ENCODE measurements at regions of chr1 and their contacts with region 1.

Region 1: GRCh38 chr1:45303582-45304310 is 22.9 kb upstream of the HPDL start:
- DNase-seq: peak; percentile 98
- CTCF ChIP-seq: peak; percentile 82

Region 2: GRCh38 chr1:44792783-44793714 is 510.7 kb before region 1 on chr1:
- CTCF ChIA-PET with region 1: interaction called, 21 read pairs
- POLR2A ChIA-PET with region 1: interaction called, 3 read pairs
- DNase-seq: no peak
- CTCF ChIP-seq: no peak

Region 3: GRCh38 chr1:45011837-45012638 is 291.7 kb before region 1 on chr1 and contains the start of gene UROD:
- CTCF ChIA-PET with region 1: interaction called, 188 read pairs
- POLR2A ChIA-PET with region 1: interaction called, 24 read pairs
- DNase-seq: peak; percentile 95
- CTCF ChIP-seq: no peak

Region 4: DNA sequence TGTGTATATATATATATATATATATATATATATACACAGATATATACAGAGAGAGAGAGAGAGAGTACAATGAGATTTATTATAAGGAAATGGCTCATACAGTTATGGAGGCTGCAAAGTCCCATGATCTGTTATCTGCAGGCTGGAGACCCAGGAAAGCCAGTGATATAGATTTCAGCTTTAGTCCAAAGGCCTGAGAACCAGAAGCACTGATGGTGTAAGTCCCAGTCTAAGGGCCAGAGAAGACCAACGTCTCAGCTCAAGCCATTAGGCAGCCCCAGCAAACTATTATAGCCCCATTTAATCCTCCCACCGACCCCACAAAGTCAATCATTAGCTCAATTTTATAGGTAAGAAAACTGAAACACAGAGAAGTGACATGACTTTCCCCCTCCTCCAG is 12.0 kb before region 1 on chr1:
- CTCF ChIA-PET with region 1: interaction called, 11 read pairs
- POLR2A ChIA-PET with region 1: no interaction called
- DNase-seq: no peak
- CTCF ChIP-seq: no peak

Region 5: GRCh38 chr1:45326627-45327623 is 23.2 kb after region 1 on chr1 and contains the start of gene HPDL:
- CTCF ChIA-PET with region 1: interaction called, 19 read pairs
- POLR2A ChIA-PET with region 1: interaction called, 5 read pairs
- DNase-seq: peak; percentile 83
- CTCF ChIP-seq: no peak

Region 6: DNA sequence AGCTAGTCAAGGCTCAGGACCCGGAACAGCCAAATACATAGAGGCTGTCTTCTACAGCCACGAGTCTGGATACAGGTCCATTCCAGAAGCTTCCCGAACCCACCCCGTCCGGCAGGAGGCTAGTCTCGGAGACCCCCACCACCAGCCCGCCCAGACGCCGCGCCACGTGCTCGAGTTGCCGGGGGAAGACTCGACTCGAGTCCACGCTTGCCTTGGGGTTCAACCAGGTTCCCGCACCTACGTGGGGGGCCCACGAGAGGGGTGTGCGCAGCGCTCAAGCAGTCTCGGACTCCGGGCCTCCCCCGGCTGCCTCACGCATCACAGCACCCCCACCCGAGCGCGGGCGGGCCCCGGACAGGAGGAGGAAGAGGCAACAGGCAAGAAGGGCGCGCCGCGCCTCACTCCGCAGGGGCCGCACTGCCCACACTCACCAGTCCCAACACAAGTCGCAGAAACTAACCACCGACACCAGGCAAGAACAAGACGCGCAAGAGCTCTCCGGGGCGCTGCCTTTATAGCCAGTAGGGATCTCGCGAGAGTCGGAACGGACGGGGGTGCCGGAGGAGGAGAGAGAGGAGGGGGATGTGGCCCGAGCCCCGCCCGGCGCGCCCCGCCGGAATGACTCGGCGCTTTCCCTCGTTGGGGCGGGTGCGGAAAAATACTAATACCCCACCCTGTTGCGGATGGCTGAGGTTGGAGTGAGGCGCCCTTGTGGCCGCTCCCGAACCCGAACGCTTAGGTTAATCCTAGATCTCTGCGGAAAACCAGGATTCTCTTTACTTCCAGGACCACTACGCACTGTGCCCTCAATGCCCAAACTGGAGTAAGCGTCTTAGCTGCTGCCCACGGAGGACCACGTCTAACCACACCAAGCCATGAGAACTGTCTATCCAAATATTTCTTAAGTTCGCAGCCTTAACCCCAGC is 217.9 kb after region 1 on chr1 and contains the start of gene PRDX1:
- CTCF ChIA-PET with region 1: no interaction called
- POLR2A ChIA-PET with region 1: interaction called, 14 read pairs
- DNase-seq: peak; percentile 95
- CTCF ChIP-seq: no peak

Measured in GM10248 (cell line).